ENCODE measurements at regions of chr2 and their contacts with region 1.

Region 1: DNA sequence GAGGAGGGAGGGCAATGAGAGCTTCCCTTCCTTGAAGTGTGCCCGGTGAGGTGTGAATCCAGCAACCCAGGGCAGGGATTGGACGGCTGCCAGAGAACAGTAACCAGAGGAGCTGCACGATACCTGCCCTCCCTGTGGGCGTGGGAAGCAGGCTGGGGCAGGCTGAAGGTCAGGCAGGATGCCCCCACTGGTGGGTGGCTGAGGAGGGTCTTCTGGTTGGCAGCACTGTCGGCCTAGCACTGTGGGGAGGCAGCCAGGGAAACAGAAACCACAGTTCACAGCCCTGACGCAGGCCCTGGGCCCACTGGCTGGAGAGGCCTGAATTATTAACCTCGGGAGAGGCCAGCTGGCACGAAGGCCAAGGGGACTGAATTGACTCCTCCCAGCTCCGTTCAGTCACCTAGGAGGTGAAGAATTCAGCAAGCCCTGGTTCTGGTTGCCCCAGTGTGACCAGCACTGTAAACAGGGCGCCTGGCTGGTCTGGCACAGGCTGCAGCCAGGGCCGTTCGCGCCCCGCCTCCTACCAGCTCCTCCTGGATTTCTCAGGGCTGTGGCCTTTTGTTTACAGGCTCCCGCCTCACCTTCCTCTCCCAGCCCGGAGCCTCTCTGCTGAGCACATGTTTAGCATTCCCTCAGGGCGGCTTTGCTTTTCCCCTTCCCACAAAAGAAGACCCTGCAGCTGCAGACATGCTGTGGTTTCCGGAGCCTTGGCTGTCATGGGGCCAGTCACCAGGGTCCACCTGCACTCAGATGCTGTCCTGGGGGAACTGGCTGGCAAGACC is 97.8 kb downstream of the B3GNT2 start:
- DNase-seq: peak; percentile 94 to 95
- H3K4me3 ChIP-seq: peak overlapping the region; percentile 46; the same call in 1 of the 2 replicates
- H3K27ac ChIP-seq: peak overlapping the region; percentile 93
- H3K4me1 ChIP-seq: peaks cover 55% of the 10 kb centered on the region
- H3K27me3 ChIP-seq: no peaks in the 10 kb centered on the region
- CTCF ChIP-seq: no peak

Region 2: GRCh38 chr2:62178741-62179271 is 114.9 kb before region 1 on chr2:
- CTCF ChIA-PET with region 1: no interaction called
- POLR2A ChIA-PET with region 1: no interaction called
- intact Hi-C with region 1: no loop called
- DNase-seq: no peak
- H3K4me3 ChIP-seq: no peak overlapping the region
- H3K27ac ChIP-seq: no peak overlapping the region
- H3K4me1 ChIP-seq: no peaks in the 10 kb centered on the region
- H3K27me3 ChIP-seq: no peaks in the 10 kb centered on the region
- CTCF ChIP-seq: no peak

Region 3: GRCh38 chr2:62221141-62221540 is 72.5 kb before region 1 on chr2:
- CTCF ChIA-PET with region 1: no interaction called
- POLR2A ChIA-PET with region 1: no interaction called
- intact Hi-C with region 1: no loop called
- DNase-seq: no peak
- H3K4me3 ChIP-seq: no peak overlapping the region
- H3K27ac ChIP-seq: no peak overlapping the region
- H3K4me1 ChIP-seq: no peaks in the 10 kb centered on the region
- H3K27me3 ChIP-seq: no peaks in the 10 kb centered on the region
- CTCF ChIP-seq: no peak

Region 4: GRCh38 chr2:62270728-62271127 is 23.0 kb before region 1 on chr2:
- CTCF ChIA-PET with region 1: no interaction called
- POLR2A ChIA-PET with region 1: interaction called, 24 read pairs
- intact Hi-C with region 1: no loop called
- DNase-seq: peak in 1 of 2 experiments; percentile 19
- H3K4me3 ChIP-seq: no peak overlapping the region
- H3K27ac ChIP-seq: no peak overlapping the region
- H3K4me1 ChIP-seq: no peaks in the 10 kb centered on the region
- H3K27me3 ChIP-seq: no peaks in the 10 kb centered on the region
- CTCF ChIP-seq: no peak

Region 5: DNA sequence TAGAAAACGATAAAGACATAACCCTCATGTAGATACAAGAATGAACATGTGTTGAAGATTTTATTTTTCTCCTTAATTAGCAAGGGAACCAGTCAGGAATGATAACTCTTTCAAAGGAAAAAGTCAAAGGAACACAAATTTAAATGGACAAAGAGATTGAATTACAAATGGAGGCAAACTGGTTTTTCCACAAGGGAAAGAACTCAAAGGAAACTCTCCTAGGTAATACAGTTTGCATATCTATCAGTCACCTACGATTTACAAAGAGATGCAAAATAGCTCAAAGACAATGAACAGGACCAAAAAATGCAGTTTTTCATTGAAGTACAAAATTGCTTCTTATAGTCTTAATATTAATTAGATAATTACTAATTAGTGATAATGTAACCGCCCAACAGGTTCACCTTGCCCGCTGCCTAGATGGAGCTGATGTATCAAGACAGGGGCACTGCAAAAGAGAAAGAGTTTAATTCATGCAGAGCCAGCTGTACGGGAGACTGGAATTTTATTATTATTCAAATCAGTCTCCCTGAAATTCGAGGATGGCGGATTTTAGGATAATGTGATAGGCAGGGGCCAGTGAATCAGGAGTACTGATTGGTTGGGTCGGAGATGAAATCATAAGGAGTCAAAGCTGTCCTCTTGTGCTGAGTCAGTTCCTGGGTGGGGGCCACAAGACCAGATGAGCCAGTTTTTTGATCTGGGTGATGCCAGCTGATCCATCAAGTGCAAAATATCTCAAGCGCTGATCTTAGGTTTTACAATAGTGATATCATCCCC is 61.3 kb after region 1 on chr2:
- CTCF ChIA-PET with region 1: no interaction called
- POLR2A ChIA-PET with region 1: no interaction called
- intact Hi-C with region 1: loop called (anchors 2 kb)
- DNase-seq: peak; percentile 71 to 95
- H3K4me3 ChIP-seq: peak overlapping the region; percentile 6; the same call in 1 of the 2 replicates
- H3K27ac ChIP-seq: peak overlapping the region; percentile 59
- H3K4me1 ChIP-seq: peaks cover 33% of the 10 kb centered on the region
- H3K27me3 ChIP-seq: no peaks in the 10 kb centered on the region
- CTCF ChIP-seq: no peak

Region 6: GRCh38 chr2:62844311-62845090 is 550.8 kb after region 1 on chr2:
- CTCF ChIA-PET with region 1: no interaction called
- POLR2A ChIA-PET with region 1: no interaction called
- intact Hi-C with region 1: no loop called
- DNase-seq: no peak
- H3K4me3 ChIP-seq: no peak overlapping the region
- H3K27ac ChIP-seq: no peak overlapping the region
- H3K4me1 ChIP-seq: no peaks in the 10 kb centered on the region
- H3K27me3 ChIP-seq: no peaks in the 10 kb centered on the region
- CTCF ChIP-seq: no peak

Measured in PC-9 (cell line).